ENCODE measurements at regions of chr1 and their contacts with region 1.

Region 1: GRCh38 chr1:2255420-2256369 is 27.6 kb downstream of the SKI start:
- DNase-seq: peak; percentile 97 to 99 (median 98)
- H3K4me3 ChIP-seq: no peak overlapping the region
- H3K27ac ChIP-seq: peak overlapping the region; percentile 71 to 84
- H3K4me1 ChIP-seq: peaks cover 0 to 32% (median 19%) of the 10 kb centered on the region in 4 experiments
- H3K27me3 ChIP-seq: no peaks in the 10 kb centered on the region

Region 2: DNA sequence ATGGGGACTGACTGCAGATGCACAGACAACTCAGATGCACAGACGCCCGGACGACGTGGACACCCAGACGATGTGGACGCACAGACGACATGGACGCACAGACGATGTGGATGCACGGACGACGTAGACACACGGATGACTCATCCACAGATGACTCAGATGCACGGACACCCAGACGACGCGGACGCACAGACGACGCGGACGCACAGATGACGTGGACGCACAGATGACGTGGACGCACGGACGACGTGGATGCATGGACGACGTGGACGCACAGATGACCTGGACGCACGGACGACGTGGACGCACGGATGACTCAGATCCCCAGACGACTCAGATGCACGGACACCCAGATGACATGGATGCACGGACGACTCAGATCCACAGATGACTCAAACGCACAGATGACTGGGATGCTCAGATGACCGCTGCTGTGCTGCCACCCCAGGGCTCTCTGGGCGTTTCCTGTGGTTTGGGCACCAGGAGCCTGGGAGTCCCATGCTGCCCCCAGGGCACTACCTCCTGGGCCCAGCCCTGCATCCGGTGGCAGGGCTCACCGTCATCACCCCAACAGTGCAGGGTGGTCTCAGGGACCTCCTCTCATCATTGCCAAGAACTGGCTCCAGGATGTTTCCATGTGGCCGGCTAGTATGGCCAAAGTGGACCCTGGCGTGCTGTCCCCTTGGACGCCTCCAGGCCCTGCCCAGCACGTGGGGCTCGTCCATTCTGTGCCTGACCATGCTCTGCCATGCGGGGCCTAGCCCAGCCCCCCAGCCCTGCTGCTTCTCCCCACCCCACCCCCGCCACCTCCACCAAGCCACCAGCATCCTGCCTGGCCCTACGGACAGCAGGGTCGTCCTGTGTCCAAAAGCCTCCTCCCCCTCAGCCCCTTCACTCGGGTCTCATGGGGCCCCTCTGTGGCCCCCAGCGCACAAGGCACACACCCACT is 75.1 kb before region 1 on chr1:
- CTCF ChIA-PET with region 1: no interaction called
- POLR2A ChIA-PET with region 1: no interaction called
- DNase-seq: no peak
- H3K4me3 ChIP-seq: no peak overlapping the region
- H3K27ac ChIP-seq: peak overlapping the region in 1 of 2 experiments; percentile 54
- H3K4me1 ChIP-seq: peaks cover 0 to 3% (median 0%) of the 10 kb centered on the region in 4 experiments
- H3K27me3 ChIP-seq: no peaks in the 10 kb centered on the region

Region 3: GRCh38 chr1:2227346-2228153 is 28.1 kb before region 1 on chr1:
- CTCF ChIA-PET with region 1: interaction called, 13 read pairs
- POLR2A ChIA-PET with region 1: interaction called, 150 read pairs
- DNase-seq: peak; percentile 94 to 97 (median 97)
- H3K4me3 ChIP-seq: peak overlapping the region; percentile 26 to 70 (median 61)
- H3K27ac ChIP-seq: peak overlapping the region in 1 of 2 experiments; percentile 49
- H3K4me1 ChIP-seq: peaks cover 0 to 57% (median 53%) of the 10 kb centered on the region in 4 experiments
- H3K27me3 ChIP-seq: peaks cover 0 to 11% (median 4%) of the 10 kb centered on the region in 5 experiments

Region 4: GRCh38 chr1:2240270-2241156 is 15.2 kb before region 1 on chr1:
- CTCF ChIA-PET with region 1: interaction called, 5 read pairs
- POLR2A ChIA-PET with region 1: interaction called, 150 read pairs
- DNase-seq: peak in 2 of 3 donors; percentile 64 to 70
- H3K4me3 ChIP-seq: no peak overlapping the region
- H3K27ac ChIP-seq: no peak overlapping the region
- H3K4me1 ChIP-seq: peaks cover 0 to 50% (median 28%) of the 10 kb centered on the region in 4 experiments
- H3K27me3 ChIP-seq: no peaks in the 10 kb centered on the region

Region 5: DNA sequence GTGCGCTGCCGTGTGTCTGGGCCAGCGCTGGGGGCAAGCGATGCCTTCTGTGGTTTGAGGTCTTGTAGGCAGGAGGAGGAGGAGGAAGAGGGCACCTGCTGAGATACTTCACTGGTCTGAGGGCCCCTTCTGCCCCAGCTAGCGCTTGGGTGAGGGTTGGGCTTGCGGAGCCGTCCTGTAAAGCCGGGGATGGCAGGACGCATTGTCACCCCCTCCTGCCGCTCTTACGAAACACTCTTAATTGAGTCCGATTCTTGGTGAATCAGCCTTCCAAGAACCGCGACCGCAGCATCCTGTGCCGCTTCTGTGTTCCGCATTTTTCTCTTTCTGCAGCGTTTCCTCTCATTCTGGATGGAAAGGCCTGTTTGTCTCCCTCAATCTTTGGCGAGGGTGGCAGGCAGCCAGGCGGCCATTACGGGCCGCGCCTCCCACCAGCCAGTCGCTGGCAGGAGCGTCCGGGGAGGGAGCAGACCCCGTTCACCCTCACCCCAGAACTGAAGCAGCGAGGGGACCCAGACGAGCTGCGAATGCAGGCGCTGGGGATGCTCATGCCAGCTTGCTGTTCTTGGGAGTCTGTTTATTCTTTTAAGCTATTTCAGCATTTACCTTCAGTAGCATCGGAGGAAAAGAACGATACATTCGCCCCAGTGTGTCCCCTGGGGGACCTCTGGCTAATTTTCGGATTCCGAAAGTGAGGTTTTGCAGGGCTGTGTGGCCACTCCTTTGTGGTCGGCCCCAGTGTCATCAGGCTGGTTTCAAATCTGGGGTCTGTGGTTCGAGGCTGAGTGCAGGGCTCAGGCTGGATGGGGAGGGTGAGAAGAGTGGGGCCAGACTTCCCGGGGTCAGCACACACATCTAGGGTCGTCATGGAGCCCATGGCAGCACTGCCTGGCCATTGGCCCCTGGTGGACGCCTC is 35.2 kb after region 1 on chr1:
- CTCF ChIA-PET with region 1: interaction called, 16 read pairs
- POLR2A ChIA-PET with region 1: interaction called, 79 read pairs
- DNase-seq: peak; percentile 98 to 99 (median 99)
- H3K4me3 ChIP-seq: peak overlapping the region in 6 of 7 experiments; percentile 19 to 75 (median 58)
- H3K27ac ChIP-seq: peak overlapping the region; percentile 64 to 80
- H3K4me1 ChIP-seq: peaks cover 10 to 79% (median 75%) of the 10 kb centered on the region in 4 experiments
- H3K27me3 ChIP-seq: no peaks in the 10 kb centered on the region

Region 6: GRCh38 chr1:2314803-2315673 is 59.3 kb after region 1 on chr1:
- CTCF ChIA-PET with region 1: interaction called, 9 read pairs
- POLR2A ChIA-PET with region 1: interaction called, 39 read pairs
- DNase-seq: peak; percentile 62 to 81 (median 74)
- H3K4me3 ChIP-seq: peak overlapping the region; percentile 0 to 76 (median 40)
- H3K27ac ChIP-seq: peak overlapping the region; percentile 40 to 68
- H3K4me1 ChIP-seq: peaks cover 0 to 59% (median 55%) of the 10 kb centered on the region in 4 experiments
- H3K27me3 ChIP-seq: no peaks in the 10 kb centered on the region

Region 7: DNA sequence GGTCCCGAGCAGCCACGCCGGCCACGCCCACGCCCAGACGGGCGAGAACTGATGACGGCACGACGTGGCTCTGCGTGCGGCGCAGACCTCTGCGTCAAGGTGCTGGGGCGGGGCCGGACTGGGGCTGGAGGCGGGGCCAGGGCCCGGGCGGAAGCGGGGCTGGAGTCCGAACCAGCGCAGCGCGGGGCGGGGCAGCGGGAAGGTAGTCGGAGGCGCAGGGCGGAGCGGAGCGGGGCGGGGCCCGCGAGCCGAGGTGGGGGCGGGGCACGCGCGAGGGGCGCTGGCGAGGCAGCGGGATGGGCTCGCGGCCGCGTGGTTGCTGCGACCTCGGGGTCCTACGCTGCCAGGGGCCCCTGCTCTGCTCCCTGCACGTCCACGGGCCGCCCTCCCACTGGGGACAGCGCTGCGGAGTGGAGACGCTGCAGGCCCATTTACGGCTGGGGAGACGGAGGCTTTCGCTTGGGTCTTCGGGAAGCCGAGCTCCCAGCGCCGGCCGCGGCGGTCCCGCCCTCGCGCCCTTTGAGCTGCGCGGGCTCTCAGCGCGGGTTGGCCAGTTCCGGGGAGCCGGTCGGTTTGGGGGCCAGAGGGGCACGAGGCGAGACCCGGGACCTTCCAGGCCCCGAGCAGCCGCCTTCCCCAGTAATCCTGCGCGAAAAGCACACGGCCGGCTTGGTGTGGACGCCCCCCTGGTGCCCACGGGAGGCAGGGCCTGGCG is 157.0 kb after region 1 on chr1 and contains the start of gene PEX10:
- CTCF ChIA-PET with region 1: no interaction called
- POLR2A ChIA-PET with region 1: no interaction called
- DNase-seq: peak; percentile 94 to 97 (median 97)
- H3K4me3 ChIP-seq: peak within 1 kb of the TSS; percentile 79 to 94 (median 90)
- H3K27ac ChIP-seq: peak within 1 kb of the TSS; percentile 64 to 83
- H3K4me1 ChIP-seq: peaks cover 0 to 51% (median 50%) of the 10 kb centered on the region in 4 experiments
- H3K27me3 ChIP-seq: peaks cover 0 to 4% (median 0%) of the 10 kb centered on the region in 5 experiments

Region 8: GRCh38 chr1:3247521-3248121 is 991.9 kb after region 1 on chr1:
- CTCF ChIA-PET with region 1: no interaction called
- POLR2A ChIA-PET with region 1: no interaction called
- DNase-seq: peak; percentile 2 to 41 (median 31)
- H3K4me3 ChIP-seq: peak overlapping the region in 4 of 7 experiments; percentile 6 to 43 (median 30)
- H3K27ac ChIP-seq: no peak overlapping the region
- H3K4me1 ChIP-seq: peaks cover 0 to 36% (median 18%) of the 10 kb centered on the region in 4 experiments
- H3K27me3 ChIP-seq: peaks cover 0 to 30% (median 6%) of the 10 kb centered on the region in 5 experiments

Measured in common myeloid progenitor, CD34-positive (primary cell).